WTC11 (cell line): ENCODE measurements at regions of chr15 and their contacts with region 1.

Region 1: DNA sequence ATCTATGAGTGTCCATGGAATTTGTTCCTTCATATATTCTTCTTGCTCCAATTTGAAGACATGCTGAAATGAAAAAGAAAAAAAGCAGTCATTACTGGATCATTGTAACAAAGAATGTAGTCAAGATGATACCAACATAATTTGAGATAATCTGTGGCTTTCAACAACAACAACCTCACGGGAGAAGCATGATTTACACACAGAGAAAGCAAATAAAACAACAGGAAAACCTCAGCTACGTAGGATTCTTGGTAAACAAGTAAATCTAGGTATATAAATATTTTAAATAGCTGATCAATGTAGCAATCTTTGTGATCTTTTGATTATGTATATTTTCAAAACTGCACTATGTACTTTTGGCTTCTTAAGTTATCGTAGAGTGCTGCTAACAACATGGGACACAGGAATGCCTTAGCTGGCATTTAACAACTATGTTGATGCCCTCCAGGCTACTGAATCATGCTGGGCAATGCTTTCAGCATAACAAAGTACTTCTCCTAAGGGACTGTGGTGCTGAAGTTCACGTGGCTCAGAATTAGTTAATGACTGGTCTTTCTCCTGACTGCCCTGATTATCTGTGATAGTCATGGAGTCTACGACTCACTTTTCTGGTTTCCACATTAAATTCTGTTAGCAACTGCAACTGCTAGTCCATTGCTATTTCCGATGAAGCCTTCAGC is 96.5 kb upstream of the MYO5C start:
- DNase-seq: peak; percentile 53
- ATAC-seq: peak; percentile 91
- H3K4me3 Mint-ChIP-seq: peak overlapping the region; percentile 38
- H3K27ac Mint-ChIP-seq: peak overlapping the region; percentile 97
- H3K4me1 Mint-ChIP-seq: peaks cover 67% of the 10 kb centered on the region
- H3K27me3 Mint-ChIP-seq: no peaks in the 10 kb centered on the region
- CTCF ChIP-seq: no peak

Region 2: GRCh38 chr15:52256366-52256765 is 135.8 kb before region 1 on chr15:
- CTCF ChIA-PET with region 1: interaction called, 10 read pairs
- POLR2A ChIA-PET with region 1: no interaction called
- DNase-seq: peak; percentile 72
- ATAC-seq: no peak
- H3K4me3 Mint-ChIP-seq: no peak overlapping the region
- H3K27ac Mint-ChIP-seq: no peak overlapping the region
- H3K4me1 Mint-ChIP-seq: peaks cover 32% of the 10 kb centered on the region
- H3K27me3 Mint-ChIP-seq: no peaks in the 10 kb centered on the region
- CTCF ChIP-seq: peak; percentile 78